ENCODE measurements at regions of chrX and their contacts with region 1.

Region 1: DNA sequence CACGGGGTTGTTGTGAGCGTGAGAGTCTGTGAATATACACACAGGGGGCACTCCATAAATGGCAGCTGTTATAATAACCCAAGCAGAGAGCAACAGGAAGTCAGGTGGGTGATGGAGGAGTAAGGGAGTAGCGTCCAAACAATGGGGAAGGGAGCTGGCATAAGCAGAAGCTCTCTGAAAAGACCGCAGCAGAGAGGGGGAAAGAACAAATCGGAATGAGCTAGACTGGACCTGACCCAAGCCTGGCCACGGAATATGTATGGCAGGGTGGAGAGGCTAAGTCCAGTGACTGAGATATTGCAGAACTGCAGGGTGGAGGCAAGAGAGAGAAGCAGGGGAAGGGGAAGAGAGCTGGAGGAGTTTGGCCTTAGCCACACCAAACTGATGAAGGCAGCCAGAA is 6.5 kb upstream of the GJB1 start:
- DNase-seq: peak; percentile 42
- ATAC-seq: no peak
- H3K4me3 ChIP-seq: peak overlapping the region; percentile 76 to 79 (median 78)
- H3K27ac ChIP-seq: peak overlapping the region; percentile 91
- H3K4me1 ChIP-seq: peaks cover 51% of the 10 kb centered on the region
- H3K27me3 ChIP-seq: no peaks in the 10 kb centered on the region; a peak in 1 of 5 replicates
- CTCF ChIP-seq: no peak
- EP300 ChIP-seq: no peak
- POLR2A ChIP-seq: peak in 1 of 2 experiments; percentile 36; a peak in 1 of 4 replicates
- RAD21 ChIP-seq: no peak

Region 2: GRCh38 chrX:71198066-71198465 is 18.4 kb before region 1 on chrX:
- CTCF ChIA-PET with region 1: no interaction called
- POLR2A ChIA-PET with region 1: interaction called, 10 read pairs
- in situ Hi-C with region 1: no loop called
- intact Hi-C with region 1: no loop called
- DNase-seq: no peak
- ATAC-seq: no peak
- H3K4me3 ChIP-seq: no peak overlapping the region
- H3K27ac ChIP-seq: no peak overlapping the region
- H3K4me1 ChIP-seq: peaks cover 39% of the 10 kb centered on the region
- H3K27me3 ChIP-seq: no peaks in the 10 kb centered on the region
- CTCF ChIP-seq: no peak
- EP300 ChIP-seq: no peak
- POLR2A ChIP-seq: no peak
- RAD21 ChIP-seq: no peak

Region 3: DNA sequence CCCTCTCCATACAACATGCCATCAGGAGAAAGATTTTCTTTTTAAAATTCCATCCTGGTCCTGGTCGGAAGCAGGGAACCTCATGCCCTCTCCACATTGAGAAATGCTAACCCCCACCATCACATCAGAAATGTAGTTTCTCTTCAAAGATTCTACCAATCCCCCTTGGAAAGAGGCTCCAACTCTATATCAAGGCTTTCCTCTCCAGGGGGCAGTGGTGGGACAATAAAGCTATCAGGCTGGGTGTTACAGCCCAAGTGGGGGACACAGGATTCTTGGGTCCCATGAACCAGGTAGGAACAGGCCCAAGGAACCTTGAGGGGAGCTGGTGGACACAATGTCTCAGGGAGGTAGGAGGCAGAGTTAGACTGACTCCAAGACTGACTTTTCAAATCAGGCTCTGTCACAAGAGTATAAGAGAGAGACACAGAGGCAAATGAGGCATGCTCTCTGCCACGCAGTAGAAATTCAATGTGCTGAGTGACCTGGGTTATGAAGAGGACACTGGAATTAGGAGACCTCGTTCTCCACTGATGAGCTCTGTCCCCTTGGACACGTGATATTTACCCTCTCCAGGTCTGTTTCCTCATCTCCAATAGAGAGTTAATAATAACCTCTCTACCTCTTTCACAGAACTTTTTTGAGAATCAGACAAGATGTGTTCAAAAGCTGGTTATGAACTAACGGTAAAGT is 11.0 kb after region 1 on chrX:
- CTCF ChIA-PET with region 1: no interaction called
- POLR2A ChIA-PET with region 1: interaction called, 140 read pairs
- in situ Hi-C with region 1: no loop called
- intact Hi-C with region 1: no loop called
- DNase-seq: peak; percentile 76
- ATAC-seq: peak; percentile 68
- H3K4me3 ChIP-seq: peak overlapping the region in 2 of 3 experiments; percentile 19 to 50; a peak in 3 of 6 replicates
- H3K27ac ChIP-seq: peak overlapping the region; percentile 100
- H3K4me1 ChIP-seq: peaks cover 92% of the 10 kb centered on the region
- H3K27me3 ChIP-seq: no peaks in the 10 kb centered on the region
- CTCF ChIP-seq: peak; percentile 39
- EP300 ChIP-seq: no peak
- POLR2A ChIP-seq: peak; percentile 58 to 64; a peak in 3 of 4 replicates
- RAD21 ChIP-seq: no peak

Region 4: GRCh38 chrX:71254092-71254941 is 37.8 kb after region 1 on chrX and contains the start of gene ZMYM3:
- CTCF ChIA-PET with region 1: no interaction called
- POLR2A ChIA-PET with region 1: interaction called, 11 read pairs
- in situ Hi-C with region 1: no loop called
- intact Hi-C with region 1: no loop called
- DNase-seq: peak; percentile 67
- ATAC-seq: peak; percentile 94
- H3K4me3 ChIP-seq: peak within 1 kb of the TSS; percentile 76 to 88 (median 83)
- H3K27ac ChIP-seq: peak within 1 kb of the TSS; percentile 78
- H3K4me1 ChIP-seq: peaks cover 35% of the 10 kb centered on the region
- H3K27me3 ChIP-seq: no peaks in the 10 kb centered on the region; a peak in 1 of 5 replicates
- CTCF ChIP-seq: no peak
- EP300 ChIP-seq: no peak
- POLR2A ChIP-seq: peak in 1 of 2 experiments; percentile 48; a peak in 1 of 4 replicates
- RAD21 ChIP-seq: no peak; the same call in 1 of the 2 replicates
- total RNA-seq, gene ZMYM3: 26.4 and 34.7 TPM in 2 replicates

Region 5: GRCh38 chrX:71326394-71326793 is 109.9 kb after region 1 on chrX:
- CTCF ChIA-PET with region 1: no interaction called
- POLR2A ChIA-PET with region 1: no interaction called
- in situ Hi-C with region 1: no loop called
- intact Hi-C with region 1: no loop called
- DNase-seq: no peak
- ATAC-seq: no peak
- H3K4me3 ChIP-seq: no peak overlapping the region
- H3K27ac ChIP-seq: no peak overlapping the region
- H3K4me1 ChIP-seq: no peaks in the 10 kb centered on the region
- H3K27me3 ChIP-seq: no peaks in the 10 kb centered on the region
- CTCF ChIP-seq: no peak
- EP300 ChIP-seq: no peak
- POLR2A ChIP-seq: no peak
- RAD21 ChIP-seq: no peak

Measured in HepG2 (cell line).